PC-9 (cell line): ENCODE measurements at regions of chr1 and their contacts with region 1.

Region 1: GRCh38 chr1:155017041-155017945 is 14.7 kb downstream of the ZBTB7B start:
- DNase-seq: peak; percentile 91 to 99
- H3K4me3 ChIP-seq: peak overlapping the region; percentile 37; the same call in 1 of the 2 replicates
- H3K27ac ChIP-seq: peak overlapping the region; percentile 53
- H3K4me1 ChIP-seq: peaks cover 36% of the 10 kb centered on the region
- H3K27me3 ChIP-seq: no peaks in the 10 kb centered on the region
- CTCF ChIP-seq: peak; percentile 93

Region 2: GRCh38 chr1:154819628-154820590 is 197.4 kb before region 1 on chr1:
- CTCF ChIA-PET with region 1: no interaction called
- POLR2A ChIA-PET with region 1: no interaction called
- intact Hi-C with region 1: no loop called
- DNase-seq: peak in 1 of 2 experiments; percentile 11
- H3K4me3 ChIP-seq: no peak overlapping the region
- H3K27ac ChIP-seq: no peak overlapping the region
- H3K4me1 ChIP-seq: no peaks in the 10 kb centered on the region
- H3K27me3 ChIP-seq: peaks cover 78% of the 10 kb centered on the region
- CTCF ChIP-seq: peak; percentile 65

Region 3: DNA sequence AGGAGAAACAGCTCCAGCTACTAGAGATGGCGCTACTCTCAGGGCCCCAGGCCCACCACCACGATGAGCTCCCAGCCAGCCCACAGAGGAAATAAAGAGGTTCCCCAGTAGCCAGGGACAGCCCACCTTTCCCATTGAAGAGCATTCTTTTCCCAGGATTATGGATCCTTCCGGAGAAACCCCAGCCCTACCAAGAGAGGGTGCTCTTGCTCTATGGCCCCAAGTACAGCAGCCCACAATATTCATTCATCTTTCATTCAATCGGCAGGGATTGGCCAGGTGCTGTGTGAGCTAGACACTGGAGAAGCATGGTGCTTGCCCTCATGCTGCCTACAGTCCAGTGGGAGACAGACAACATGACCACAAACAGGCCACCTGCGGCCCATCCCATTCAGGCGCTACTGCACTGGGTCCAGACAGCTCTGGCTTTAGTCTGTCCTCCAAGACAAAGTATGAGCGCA is 110.6 kb before region 1 on chr1:
- CTCF ChIA-PET with region 1: interaction called, 10 read pairs
- POLR2A ChIA-PET with region 1: no interaction called
- intact Hi-C with region 1: no loop called
- DNase-seq: peak in 1 of 2 experiments; percentile 6
- H3K4me3 ChIP-seq: no peak overlapping the region
- H3K27ac ChIP-seq: no peak overlapping the region
- H3K4me1 ChIP-seq: no peaks in the 10 kb centered on the region
- H3K27me3 ChIP-seq: peaks cover 36% of the 10 kb centered on the region
- CTCF ChIP-seq: peak; percentile 60

Region 4: GRCh38 chr1:154961497-154962262 is 55.6 kb before region 1 on chr1 and contains the start of gene PYGO2:
- CTCF ChIA-PET with region 1: no interaction called
- POLR2A ChIA-PET with region 1: no interaction called
- intact Hi-C with region 1: loop called (anchors 2 kb)
- DNase-seq: peak; percentile 64 to 88
- H3K4me3 ChIP-seq: peak within 1 kb of the TSS; percentile 78
- H3K27ac ChIP-seq: peak within 1 kb of the TSS; percentile 72
- H3K4me1 ChIP-seq: peaks cover 18% of the 10 kb centered on the region
- H3K27me3 ChIP-seq: no peaks in the 10 kb centered on the region
- CTCF ChIP-seq: peak; percentile 60; the same call in 1 of the 2 replicates
- total RNA-seq, gene PYGO2: 30.0 and 33.2 TPM in 2 replicates

Region 5: GRCh38 chr1:155044812-155045690 is 27.8 kb after region 1 on chr1:
- CTCF ChIA-PET with region 1: interaction called, 8 read pairs
- POLR2A ChIA-PET with region 1: interaction called, 5 read pairs
- intact Hi-C with region 1: loop called (anchors 2 kb)
- DNase-seq: peak; percentile 79
- H3K4me3 ChIP-seq: no peak overlapping the region
- H3K27ac ChIP-seq: no peak overlapping the region
- H3K4me1 ChIP-seq: peaks cover 24% of the 10 kb centered on the region
- H3K27me3 ChIP-seq: no peaks in the 10 kb centered on the region
- CTCF ChIP-seq: peak; percentile 73